ENCODE measurements at regions of chr7 and their contacts with region 1.

Region 1: GRCh38 chr7:134357492-134357891 is 40.8 kb upstream of the SLC35B4 start:
- DNase-seq: no peak
- H3K4me3 ChIP-seq: no peak overlapping the region
- H3K4me3 Mint-ChIP-seq: no peak overlapping the region
- H3K27ac ChIP-seq: no peak overlapping the region
- H3K27ac Mint-ChIP-seq: no peak overlapping the region
- H3K4me1 ChIP-seq: no peaks in the 10 kb centered on the region
- H3K4me1 Mint-ChIP-seq: peaks cover 0 to 3% (median 3%) of the 10 kb centered on the region in 3 donors
- H3K27me3 ChIP-seq: no peaks in the 10 kb centered on the region
- H3K27me3 Mint-ChIP-seq: peaks cover 0 to 14% of the 10 kb centered on the region in 2 donors

Region 2: DNA sequence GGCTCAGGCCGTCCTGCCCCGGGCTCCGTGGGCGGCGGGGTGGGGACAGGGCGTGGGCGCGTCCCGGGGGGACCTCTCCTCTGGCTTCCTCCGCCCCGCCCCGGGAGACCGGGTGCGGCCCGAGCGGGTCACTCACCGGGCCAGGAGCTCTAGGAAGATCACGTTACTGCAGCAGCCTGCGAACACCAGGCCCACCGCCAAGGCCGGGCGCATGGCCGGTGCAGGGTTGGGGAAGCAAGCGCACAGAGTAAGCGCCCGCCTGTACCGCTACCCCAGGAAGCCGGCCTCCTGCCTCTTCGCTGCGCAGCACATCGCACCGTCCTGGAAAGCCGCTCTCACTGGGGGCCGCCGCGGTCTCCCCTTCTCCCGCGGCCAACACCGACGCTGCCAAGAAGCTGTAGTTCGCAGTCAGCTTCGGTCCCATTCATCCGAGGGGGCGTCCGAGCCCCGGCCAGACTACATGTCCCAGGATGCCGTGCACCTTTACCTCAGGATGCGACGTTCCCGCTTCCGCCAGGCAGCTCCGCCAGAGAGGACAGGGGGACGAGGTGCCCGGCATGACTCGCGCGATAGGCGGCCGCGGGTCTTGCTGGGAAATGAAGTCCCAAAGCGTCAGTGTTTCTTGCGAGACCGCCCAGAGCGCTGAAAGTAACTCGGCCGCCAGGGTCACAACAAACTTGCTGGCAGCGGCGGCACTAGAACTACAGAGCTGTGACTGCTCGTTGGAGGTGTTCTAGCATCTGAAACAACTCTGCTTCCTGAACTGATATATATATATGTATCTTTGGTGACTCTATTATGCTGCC is 40.8 kb before region 1 on chr7 and contains the start of gene SLC35B4:
- CTCF ChIA-PET with region 1: interaction called, 11 read pairs
- POLR2A ChIA-PET with region 1: no interaction called
- DNase-seq: peak; percentile 90 to 96 (median 92)
- H3K4me3 ChIP-seq: peak within 1 kb of the TSS; percentile 85
- H3K4me3 Mint-ChIP-seq: peak within 1 kb of the TSS; percentile 92 to 98 (median 95)
- H3K27ac ChIP-seq: peak within 1 kb of the TSS; percentile 61
- H3K27ac Mint-ChIP-seq: peak within 1 kb of the TSS; percentile 7 to 93 (median 91)
- H3K4me1 ChIP-seq: peaks cover 11% of the 10 kb centered on the region
- H3K4me1 Mint-ChIP-seq: peaks cover 23 to 28% (median 26%) of the 10 kb centered on the region in 3 donors
- H3K27me3 ChIP-seq: no peaks in the 10 kb centered on the region
- H3K27me3 Mint-ChIP-seq: peaks cover 1 to 4% of the 10 kb centered on the region in 2 donors
- total RNA-seq, gene SLC35B4: 18.6 to 20.5 TPM

Region 3: DNA sequence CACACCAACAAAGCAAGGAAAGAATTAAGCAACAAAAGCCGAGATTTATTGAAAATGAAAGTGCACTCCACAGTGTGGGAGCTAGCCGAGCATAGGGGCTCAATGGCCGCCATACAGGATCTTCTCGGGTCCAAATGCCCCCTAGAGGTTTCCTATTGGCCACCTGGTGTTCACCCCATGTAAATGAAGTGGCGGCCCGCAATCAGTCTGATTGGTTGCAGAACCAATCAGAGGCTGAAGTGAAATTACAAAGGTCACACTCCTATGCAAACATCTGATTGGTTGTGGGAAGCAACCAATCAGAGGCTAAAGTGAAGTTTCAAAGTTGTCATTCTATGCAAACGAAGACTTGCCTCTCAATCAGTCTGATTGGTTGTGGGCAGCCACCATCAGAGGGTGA is 21.1 kb after region 1 on chr7:
- CTCF ChIA-PET with region 1: no interaction called
- POLR2A ChIA-PET with region 1: no interaction called
- DNase-seq: no peak
- H3K4me3 ChIP-seq: no peak overlapping the region
- H3K4me3 Mint-ChIP-seq: peak overlapping the region in 2 of 7 donors; percentile 39 to 44
- H3K27ac ChIP-seq: no peak overlapping the region
- H3K27ac Mint-ChIP-seq: no peak overlapping the region
- H3K4me1 ChIP-seq: no peaks in the 10 kb centered on the region
- H3K4me1 Mint-ChIP-seq: peaks cover 0 to 1% (median 0%) of the 10 kb centered on the region in 3 donors
- H3K27me3 ChIP-seq: no peaks in the 10 kb centered on the region
- H3K27me3 Mint-ChIP-seq: peaks cover 9 to 37% of the 10 kb centered on the region in 2 donors

Region 4: DNA sequence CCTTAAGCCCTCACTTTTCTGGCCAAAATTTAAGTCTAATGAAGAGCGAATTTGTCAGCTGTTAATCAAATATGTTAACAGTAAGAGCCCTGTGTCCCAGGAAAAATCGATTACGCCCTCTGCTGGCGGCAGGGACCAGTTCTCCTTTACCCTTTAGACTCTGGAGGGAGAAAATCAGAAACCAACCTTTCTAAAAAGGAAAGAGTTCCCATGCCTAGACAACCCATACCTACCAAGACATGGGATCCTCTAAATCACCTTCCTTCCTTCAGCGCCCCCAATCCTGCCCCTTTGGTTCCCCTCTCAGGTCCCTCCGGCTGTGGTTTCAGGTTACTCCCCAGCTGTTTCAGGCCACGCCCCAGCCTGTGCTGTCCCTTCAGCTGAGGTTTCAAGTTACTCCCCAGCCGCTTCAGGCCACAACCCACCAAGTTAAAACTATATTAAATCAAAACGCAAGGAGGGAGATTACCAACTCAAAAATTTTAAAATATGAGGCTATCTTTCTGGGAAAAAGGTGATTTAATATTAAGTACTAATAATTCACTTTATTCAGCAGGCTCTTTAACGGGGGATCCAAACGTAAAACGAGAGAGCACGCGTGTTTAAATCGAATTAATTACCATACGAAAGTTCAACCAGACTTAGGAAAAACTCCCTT is 190.0 kb after region 1 on chr7:
- CTCF ChIA-PET with region 1: no interaction called
- POLR2A ChIA-PET with region 1: no interaction called
- DNase-seq: peak; percentile 34 to 73 (median 44)
- H3K4me3 ChIP-seq: no peak overlapping the region
- H3K4me3 Mint-ChIP-seq: peak overlapping the region in 2 of 7 donors; percentile 24 to 40
- H3K27ac ChIP-seq: no peak overlapping the region
- H3K27ac Mint-ChIP-seq: no peak overlapping the region
- H3K4me1 ChIP-seq: no peaks in the 10 kb centered on the region
- H3K4me1 Mint-ChIP-seq: peaks cover 0 to 3% (median 0%) of the 10 kb centered on the region in 3 donors
- H3K27me3 ChIP-seq: no peaks in the 10 kb centered on the region
- H3K27me3 Mint-ChIP-seq: peaks cover 24 to 26% of the 10 kb centered on the region in 2 donors